A549 (cell line): ENCODE measurements at regions of chr11 and their contacts with region 1.

Region 1: GRCh38 chr11:34180040-34180813 is 74.8 kb downstream of the NAT10 start:
- DNase-seq: no peak
- ATAC-seq: no peak
- H3K4me3 ChIP-seq: no peak overlapping the region
- H3K27ac ChIP-seq: no peak overlapping the region
- H3K4me1 ChIP-seq: peaks cover 12% of the 10 kb centered on the region
- CTCF ChIP-seq: no peak
- EP300 ChIP-seq: no peak
- POLR2A ChIP-seq: no peak
- RAD21 ChIP-seq: no peak

Region 2: DNA sequence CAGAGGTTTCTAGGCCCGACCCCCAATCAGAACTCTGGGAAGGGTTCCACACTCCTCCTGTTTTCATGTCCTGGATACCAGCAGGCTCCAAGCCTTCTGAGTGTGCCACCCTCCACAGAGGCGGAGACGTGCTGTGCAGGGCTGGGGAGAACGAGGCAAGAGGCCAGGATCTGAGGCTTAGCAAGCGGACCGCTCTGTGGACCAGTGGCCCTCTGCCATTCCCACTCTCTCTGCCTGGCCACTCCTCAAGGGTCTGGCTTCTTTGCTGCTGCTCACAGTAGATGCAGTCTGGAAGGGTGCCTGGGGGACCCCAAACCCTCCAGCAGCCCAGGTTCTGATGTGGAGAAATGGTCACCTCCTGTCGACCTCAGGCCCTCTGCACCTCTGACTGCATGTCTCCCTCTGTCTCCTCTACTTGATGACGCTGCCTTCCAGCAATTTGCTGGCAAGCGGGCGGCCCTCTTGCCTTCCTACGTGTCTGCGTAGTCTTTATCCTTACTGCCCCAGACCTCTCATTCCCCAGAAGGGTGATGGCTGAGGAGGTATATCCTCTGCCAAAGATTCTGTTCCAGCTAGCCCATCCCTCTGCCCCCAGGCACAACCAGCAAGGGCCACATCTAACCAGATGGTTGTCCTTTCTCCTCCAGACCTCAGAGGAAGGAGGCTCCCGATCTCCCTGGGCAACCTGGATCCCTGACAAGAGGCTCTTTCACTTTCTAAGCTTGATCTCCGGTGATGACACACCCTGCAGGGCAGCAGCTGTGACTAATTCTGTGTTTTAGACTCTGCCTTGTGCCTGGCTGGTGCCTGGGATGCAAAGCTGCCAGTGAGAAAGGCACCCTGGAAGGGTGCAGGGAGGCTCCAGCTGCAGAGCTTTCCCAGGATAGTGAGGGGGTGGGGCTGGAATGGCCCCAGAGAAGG is 12.5 kb after region 1 on chr11:
- CTCF ChIA-PET with region 1: interaction called, 30 read pairs
- POLR2A ChIA-PET with region 1: no interaction called
- DNase-seq: peak; percentile 52 to 78
- ATAC-seq: peak; percentile 88
- H3K4me3 ChIP-seq: no peak overlapping the region
- H3K27ac ChIP-seq: peak overlapping the region; percentile 23 to 76; a peak in 3 of 6 replicates
- H3K4me1 ChIP-seq: peaks cover 28% of the 10 kb centered on the region
- CTCF ChIP-seq: no peak
- EP300 ChIP-seq: no peak
- POLR2A ChIP-seq: no peak
- RAD21 ChIP-seq: no peak